Posterior cingulate gyrus (tissue), 11 donors: ENCODE measurements at regions of chr2 and their contacts with region 1.

Region 1: GRCh38 chr2:109284826-109285225 is 155.8 kb downstream of the SH3RF3 start:
- DNase-seq: peak in 3 of 10 donors; percentile 17 to 84 (median 77)

Region 2: GRCh38 chr2:109110170-109110569 is 174.7 kb before region 1 on chr2:
- intact Hi-C with region 1: no loop called
- DNase-seq: no peak

Region 3: DNA sequence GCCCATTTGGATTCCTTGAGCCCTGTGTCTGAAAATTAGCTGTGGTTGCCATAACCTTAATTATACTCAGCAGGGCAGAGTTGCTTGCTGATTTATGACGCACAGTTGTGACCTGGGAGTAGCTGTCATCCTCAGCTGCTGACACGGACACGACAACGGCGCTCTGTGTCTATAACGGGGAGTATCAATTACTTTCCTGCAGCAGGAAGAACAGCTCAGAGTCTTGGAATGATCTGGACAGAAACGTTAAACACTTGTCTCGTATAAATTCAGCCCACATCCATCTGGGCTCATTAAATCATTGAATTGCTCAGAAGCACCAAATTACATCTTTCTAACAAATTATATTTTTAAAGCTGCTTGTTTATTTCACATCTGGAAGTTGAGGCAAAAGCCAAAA is 212.6 kb after region 1 on chr2:
- intact Hi-C with region 1: loop called (anchors 10 kb)
- DNase-seq: no peak